Esophagus muscularis mucosa (tissue), 4 donors: ENCODE measurements at regions of chr15 and their contacts with region 1.

Region 1: DNA sequence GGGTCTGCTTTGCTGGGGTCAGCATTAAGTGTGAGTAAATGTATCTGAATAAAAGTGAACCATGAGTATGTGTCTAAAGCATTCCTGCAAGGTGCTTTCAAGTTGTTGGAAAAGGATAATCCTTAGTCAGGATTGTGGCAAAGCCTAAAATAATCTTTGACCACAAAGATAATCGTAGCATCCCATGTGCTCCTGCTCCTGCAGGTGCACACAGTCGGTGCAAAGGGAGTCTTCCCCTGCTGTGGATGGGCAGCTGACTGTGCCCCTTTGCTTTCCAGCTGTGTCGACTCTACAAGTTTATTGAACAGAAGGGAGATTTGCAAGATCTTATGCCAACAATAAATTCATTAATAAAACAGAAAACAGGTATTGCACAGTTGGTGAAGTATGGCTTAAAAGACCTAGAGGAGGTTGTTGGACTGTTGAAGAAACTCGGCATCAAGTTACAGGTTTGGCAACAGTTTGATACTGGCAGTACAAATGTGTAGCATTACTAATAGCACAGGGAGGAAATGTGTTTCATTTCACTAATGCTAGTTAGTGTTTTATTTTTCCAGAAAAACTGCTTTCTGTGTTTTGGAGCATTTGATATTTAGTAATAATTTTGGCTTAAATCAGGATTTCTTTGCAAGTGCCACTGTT is 22.6 kb downstream of the SRP14 start:
- DNase-seq: no peak
- H3K4me3 ChIP-seq: no peak overlapping the region
- H3K27ac ChIP-seq: no peak overlapping the region
- H3K4me1 ChIP-seq: no peaks in the 10 kb centered on the region
- H3K27me3 ChIP-seq: no peaks in the 10 kb centered on the region
- CTCF ChIP-seq: no peak
- EP300 ChIP-seq: no peak
- POLR2A ChIP-seq: no peak

Region 2: DNA sequence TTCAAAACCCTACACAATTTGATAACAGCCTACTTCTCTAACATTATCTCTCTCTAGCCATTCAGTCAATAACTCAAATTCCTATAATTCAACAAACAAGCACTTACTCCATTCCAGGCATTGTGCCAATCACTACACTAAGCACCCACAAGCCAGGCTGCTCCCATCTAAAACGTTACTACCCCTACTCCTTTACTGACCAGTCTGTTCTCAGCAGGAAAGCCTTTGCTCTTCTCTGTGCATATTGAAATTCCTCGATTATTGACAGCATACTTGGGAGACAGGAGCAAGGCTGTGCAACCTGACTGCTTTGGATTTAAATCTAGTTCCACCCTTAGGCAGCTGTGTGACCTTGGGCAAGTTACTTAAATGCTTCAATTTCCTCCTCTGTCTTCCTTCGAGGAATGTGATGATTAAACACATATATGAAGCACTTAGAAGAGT is 612.6 kb before region 1 on chr15:
- intact Hi-C with region 1: no loop called
- DNase-seq: peak; percentile 70
- H3K4me3 ChIP-seq: no peak overlapping the region
- H3K27ac ChIP-seq: no peak overlapping the region
- H3K4me1 ChIP-seq: peaks cover 12 to 21% (median 17%) of the 10 kb centered on the region in 4 donors
- H3K27me3 ChIP-seq: no peaks in the 10 kb centered on the region
- CTCF ChIP-seq: no peak
- EP300 ChIP-seq: no peak
- POLR2A ChIP-seq: no peak

Region 3: DNA sequence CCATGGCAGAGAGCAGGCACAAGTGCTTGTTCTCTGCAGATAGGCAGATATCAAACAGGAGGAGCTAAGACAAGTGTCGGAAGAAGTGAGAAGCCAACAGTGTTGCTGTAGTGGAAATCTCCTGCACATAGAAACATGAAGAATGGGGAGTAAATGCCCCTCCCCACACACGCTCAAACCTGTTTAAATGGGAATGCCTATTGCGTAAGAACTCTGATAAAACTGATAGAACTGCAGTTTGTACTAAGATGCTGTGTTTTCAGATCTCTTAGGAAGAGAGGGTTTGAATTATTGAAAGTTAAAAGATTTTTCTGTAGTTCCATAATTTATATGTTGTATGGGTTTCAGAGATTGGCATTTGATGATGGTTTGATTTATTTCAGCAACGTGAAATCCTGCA is 62.8 kb before region 1 on chr15:
- intact Hi-C with region 1: loop called (anchors 5 kb)
- DNase-seq: no peak
- H3K4me3 ChIP-seq: no peak overlapping the region
- H3K27ac ChIP-seq: no peak overlapping the region
- H3K4me1 ChIP-seq: no peaks in the 10 kb centered on the region
- H3K27me3 ChIP-seq: no peaks in the 10 kb centered on the region
- CTCF ChIP-seq: no peak
- EP300 ChIP-seq: no peak
- POLR2A ChIP-seq: no peak

Region 4: GRCh38 chr15:39963786-39964185 is 52.6 kb before region 1 on chr15:
- intact Hi-C with region 1: no loop called
- DNase-seq: no peak
- H3K4me3 ChIP-seq: no peak overlapping the region
- H3K27ac ChIP-seq: no peak overlapping the region
- H3K4me1 ChIP-seq: no peaks in the 10 kb centered on the region
- H3K27me3 ChIP-seq: no peaks in the 10 kb centered on the region
- CTCF ChIP-seq: no peak
- EP300 ChIP-seq: no peak
- POLR2A ChIP-seq: no peak